Posterior vena cava (tissue), 2 donors: ENCODE measurements at regions of chr16 and their contacts with region 1.

Region 1: DNA sequence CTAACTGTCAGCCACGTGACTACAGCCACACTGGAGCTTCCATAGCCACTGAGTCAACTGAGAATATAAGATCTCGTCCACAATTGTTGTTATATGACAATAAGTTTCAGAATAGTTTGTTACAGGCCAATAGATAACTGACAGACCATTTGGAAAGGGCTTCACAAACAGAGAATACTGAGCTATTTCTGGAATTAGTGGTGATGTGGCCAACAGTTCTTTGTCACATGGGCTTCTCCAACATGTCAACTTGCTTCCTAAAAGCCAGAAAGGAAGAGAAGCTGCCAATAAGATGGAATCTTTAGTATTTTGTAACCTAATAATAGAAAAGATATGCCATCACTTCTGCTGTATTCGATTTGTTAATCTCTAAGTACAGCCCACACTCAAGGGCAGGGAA is 1220.4 kb downstream of the CDH8 start:
- DNase-seq: no peak

Region 2: GRCh38 chr16:60041671-60042070 is 774.2 kb before region 1 on chr16:
- intact Hi-C with region 1: loop called in 1 of 2 experiments (anchors 5 kb)
- DNase-seq: no peak

Region 3: GRCh38 chr16:60755907-60756306 is 60.0 kb before region 1 on chr16:
- intact Hi-C with region 1: no loop called
- DNase-seq: no peak